ENCODE measurements at regions of chr7 and their contacts with region 1.

Region 1: DNA sequence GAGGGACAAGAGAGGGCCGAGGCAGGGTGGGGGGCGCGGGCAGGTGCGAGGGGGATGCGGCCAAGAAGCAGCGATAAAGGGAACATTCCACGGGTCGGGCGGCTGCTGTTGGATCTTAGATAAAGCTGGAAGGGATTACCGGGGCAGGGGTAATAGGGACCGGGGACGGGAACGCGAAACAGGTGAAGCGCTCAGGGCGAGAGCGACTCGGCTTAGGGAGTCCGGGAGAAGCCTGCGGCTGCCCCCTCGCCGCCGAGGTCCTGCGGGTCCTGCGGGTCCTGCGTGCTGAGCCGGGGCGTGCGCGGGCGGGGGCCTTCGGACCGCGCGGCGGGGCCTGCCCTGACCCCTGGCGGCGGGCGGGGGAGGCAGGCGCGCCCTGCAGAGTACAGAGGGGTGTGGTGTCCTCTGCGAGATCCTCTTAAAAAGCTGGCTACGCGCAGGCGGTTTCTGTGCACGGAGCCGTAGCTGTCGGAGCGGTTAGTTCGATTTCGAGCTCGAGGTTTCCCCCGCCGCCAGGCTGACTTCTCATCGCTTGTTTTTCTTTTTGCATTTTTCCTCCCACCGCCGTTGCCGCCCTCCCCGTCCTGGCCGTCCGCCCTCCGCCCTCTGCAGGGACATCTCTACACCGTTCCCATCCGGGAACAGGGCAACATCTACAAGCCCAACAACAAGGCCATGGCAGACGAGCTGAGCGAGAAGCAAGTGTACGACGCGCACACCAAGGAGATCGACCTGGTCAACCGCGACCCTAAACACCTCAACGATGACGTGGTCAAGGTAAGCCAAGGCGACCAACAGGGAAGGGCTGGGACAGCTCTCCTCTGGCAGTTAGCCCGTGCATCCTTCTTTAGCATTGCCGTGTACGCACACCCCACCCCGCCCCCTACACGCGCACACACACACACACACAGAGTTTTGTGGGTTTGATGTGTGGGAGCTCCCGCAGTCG is 1.4 kb downstream of the CAV1 start:
- DNase-seq: peak; percentile 71
- H3K4me3 Mint-ChIP-seq: peak overlapping the region; percentile 78
- H3K27ac Mint-ChIP-seq: no peak overlapping the region
- H3K4me1 Mint-ChIP-seq: peaks cover 21% of the 10 kb centered on the region
- H3K27me3 Mint-ChIP-seq: peaks cover 67% of the 10 kb centered on the region

Region 2: GRCh38 chr7:116173051-116174028 is 352.8 kb before region 1 on chr7:
- CTCF ChIA-PET with region 1: interaction called, 5 read pairs
- POLR2A ChIA-PET with region 1: no interaction called
- intact Hi-C with region 1: loop called (anchors 1 kb)
- DNase-seq: no peak
- H3K4me3 Mint-ChIP-seq: no peak overlapping the region
- H3K27ac Mint-ChIP-seq: no peak overlapping the region
- H3K4me1 Mint-ChIP-seq: no peaks in the 10 kb centered on the region
- H3K27me3 Mint-ChIP-seq: peaks cover 4% of the 10 kb centered on the region

Region 3: DNA sequence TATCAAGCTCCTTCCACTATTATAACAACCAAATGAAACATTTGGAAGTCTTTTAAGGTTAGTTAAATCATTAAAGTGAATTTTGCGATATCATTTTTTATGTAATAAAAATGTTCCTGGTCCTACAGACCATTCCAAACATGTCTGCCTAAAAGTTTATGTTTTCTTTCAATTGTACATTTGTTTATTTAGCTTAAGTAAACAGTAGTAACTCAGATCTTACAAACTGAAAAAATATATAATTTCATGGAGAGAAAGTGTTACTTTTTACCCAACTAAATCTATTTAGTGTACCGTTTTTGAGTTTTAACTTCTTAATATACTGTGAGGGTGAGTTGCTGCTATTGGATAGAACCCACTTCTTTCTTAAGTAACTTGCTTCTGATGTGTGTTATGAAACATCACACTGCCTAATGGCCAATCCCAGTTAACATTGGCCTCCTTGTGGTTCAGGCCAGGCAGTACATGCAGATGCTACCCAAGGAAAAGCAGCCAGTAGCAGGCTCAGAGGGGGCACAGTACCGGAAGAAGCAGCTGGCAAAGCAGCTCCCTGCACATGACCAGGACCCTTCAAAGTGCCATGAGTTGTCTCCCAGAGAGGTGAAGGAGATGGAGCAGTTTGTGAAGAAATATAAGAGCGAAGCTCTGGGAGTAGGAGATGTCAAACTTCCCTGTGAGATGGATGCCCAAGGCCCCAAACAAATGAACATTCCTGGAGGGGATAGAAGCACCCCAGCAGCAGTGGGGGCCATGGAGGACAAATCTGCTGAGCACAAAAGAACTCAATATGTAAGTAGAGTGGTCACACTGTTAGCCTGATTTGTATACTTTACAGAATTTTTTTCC is 276.3 kb before region 1 on chr7:
- CTCF ChIA-PET with region 1: interaction called, 10 read pairs
- POLR2A ChIA-PET with region 1: no interaction called
- intact Hi-C with region 1: no loop called
- DNase-seq: no peak
- H3K4me3 Mint-ChIP-seq: no peak overlapping the region
- H3K27ac Mint-ChIP-seq: peak overlapping the region; percentile 31
- H3K4me1 Mint-ChIP-seq: peaks cover 27% of the 10 kb centered on the region
- H3K27me3 Mint-ChIP-seq: no peaks in the 10 kb centered on the region

Region 4: GRCh38 chr7:116316833-116317612 is 209.2 kb before region 1 on chr7:
- CTCF ChIA-PET with region 1: interaction called, 3 read pairs
- POLR2A ChIA-PET with region 1: no interaction called
- intact Hi-C with region 1: loop called (anchors 1 kb)
- DNase-seq: peak; percentile 62
- H3K4me3 Mint-ChIP-seq: no peak overlapping the region
- H3K27ac Mint-ChIP-seq: peak overlapping the region; percentile 48
- H3K4me1 Mint-ChIP-seq: peaks cover 16% of the 10 kb centered on the region
- H3K27me3 Mint-ChIP-seq: peaks cover 24% of the 10 kb centered on the region

Region 5: GRCh38 chr7:116576350-116577319 is 50.4 kb after region 1 on chr7:
- CTCF ChIA-PET with region 1: interaction called, 14 read pairs
- POLR2A ChIA-PET with region 1: no interaction called
- intact Hi-C with region 1: no loop called
- DNase-seq: peak; percentile 35
- H3K4me3 Mint-ChIP-seq: no peak overlapping the region
- H3K27ac Mint-ChIP-seq: no peak overlapping the region
- H3K4me1 Mint-ChIP-seq: peaks cover 10% of the 10 kb centered on the region
- H3K27me3 Mint-ChIP-seq: peaks cover 6% of the 10 kb centered on the region